ENCODE measurements at regions of chr4 and their contacts with region 1.

Region 1: GRCh38 chr4:86155766-86156165 is 204.1 kb downstream of the MAPK10 start:
- DNase-seq: no peak
- ATAC-seq: no peak
- H3K4me3 ChIP-seq: no peak overlapping the region
- H3K27ac ChIP-seq: no peak overlapping the region
- H3K4me1 ChIP-seq: no peaks in the 10 kb centered on the region
- H3K27me3 ChIP-seq: no peaks in the 10 kb centered on the region
- CTCF ChIP-seq: no peak

Region 2: DNA sequence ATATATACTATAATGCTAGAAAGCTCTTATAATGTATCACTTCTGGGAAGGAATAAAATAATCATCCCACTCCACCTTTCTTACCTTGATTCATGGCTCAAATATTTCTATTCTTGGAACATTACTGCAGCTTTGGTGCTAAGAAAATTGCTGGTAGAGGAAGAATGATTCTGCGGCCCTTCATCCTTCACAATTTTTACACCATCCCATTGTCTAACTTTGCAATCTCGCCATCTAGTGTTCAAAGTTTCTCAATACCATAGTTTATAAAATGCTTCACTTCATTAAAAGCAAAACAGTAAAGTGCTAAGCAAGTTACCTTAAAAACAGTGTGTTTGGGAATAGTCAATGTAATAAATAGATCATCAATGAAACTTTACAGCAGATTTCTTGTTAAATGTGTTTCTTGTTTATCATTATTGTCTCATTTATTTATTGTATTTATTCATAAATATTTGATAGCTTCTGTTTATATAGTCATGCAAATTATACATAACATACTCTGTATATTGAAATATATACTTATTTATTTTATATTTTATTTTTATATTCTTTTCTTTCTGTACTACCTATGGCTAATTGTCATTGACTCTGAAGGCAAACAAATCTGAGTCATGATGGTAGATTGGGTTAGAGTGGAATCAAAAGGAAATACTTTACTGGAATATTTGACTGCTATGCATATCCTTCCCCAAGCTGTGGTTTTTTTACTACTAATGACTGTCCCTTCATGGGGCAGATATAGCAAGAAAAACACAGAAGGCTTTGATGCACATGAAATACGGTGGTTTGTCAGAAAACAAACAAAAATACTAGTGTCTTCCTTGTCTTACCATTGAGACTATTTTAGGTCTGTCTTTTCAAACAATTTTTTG is 186.6 kb before region 1 on chr4:
- intact Hi-C with region 1: no loop called
- DNase-seq: no peak
- ATAC-seq: peak in 6 of 8 donors; percentile 55 to 68 (median 66)
- H3K4me3 ChIP-seq: no peak overlapping the region
- H3K27ac ChIP-seq: no peak overlapping the region
- H3K4me1 ChIP-seq: peaks cover 0 to 50% (median 26%) of the 10 kb centered on the region in 9 donors
- H3K27me3 ChIP-seq: no peaks in the 10 kb centered on the region
- CTCF ChIP-seq: peak; percentile 33 to 79 (median 66)

Region 3: DNA sequence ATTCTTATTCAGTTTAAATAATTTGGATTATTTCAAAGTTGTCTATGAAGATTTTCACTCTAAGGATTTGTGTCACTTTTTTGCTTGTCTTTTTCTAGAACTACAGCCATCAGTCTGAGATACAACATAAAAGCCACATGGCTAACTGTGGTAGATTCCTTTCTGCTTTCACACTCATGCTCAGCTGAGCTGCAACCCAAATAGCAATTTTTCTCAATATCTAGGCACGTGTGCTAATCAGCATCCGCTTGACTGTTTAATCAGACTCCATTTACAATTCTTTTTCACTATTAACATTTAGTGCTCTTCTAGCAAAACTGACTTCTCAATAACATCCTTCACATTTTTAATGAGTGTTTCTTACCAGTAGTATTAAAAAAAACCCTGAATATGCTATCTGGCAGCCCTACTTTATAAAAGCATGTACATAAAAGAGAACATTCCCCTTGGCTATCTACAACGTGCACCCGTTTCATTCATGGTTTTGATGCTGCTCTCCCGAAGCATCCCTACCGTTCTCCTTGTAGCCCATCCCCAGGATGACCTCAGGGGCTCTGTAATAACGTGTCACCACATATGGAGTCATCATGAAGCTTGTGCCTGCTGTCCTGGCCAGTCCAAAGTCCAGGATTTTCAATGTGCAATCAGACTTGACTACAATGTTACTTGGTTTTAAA is 55.1 kb before region 1 on chr4:
- intact Hi-C with region 1: no loop called
- DNase-seq: no peak
- ATAC-seq: no peak
- H3K4me3 ChIP-seq: no peak overlapping the region
- H3K27ac ChIP-seq: no peak overlapping the region
- H3K4me1 ChIP-seq: no peaks in the 10 kb centered on the region
- H3K27me3 ChIP-seq: no peaks in the 10 kb centered on the region
- CTCF ChIP-seq: no peak

Region 4: DNA sequence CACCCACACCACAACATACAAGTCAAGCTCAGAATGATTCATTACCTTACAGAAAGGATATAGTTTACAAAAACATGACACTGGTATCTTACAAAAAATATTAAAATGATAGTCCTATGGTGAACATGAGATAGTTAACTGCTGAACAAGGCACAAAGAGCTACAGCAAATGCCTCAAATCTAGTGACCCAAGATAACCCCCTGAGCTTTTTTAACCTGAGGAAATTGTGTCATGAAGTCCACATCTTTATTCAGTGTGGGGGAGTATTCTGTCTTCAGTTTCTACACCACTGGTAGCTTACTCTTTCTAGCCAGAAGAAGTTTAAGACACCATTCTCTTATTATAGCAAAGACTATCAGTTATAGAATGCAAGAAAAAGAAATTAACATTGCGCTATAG is 14.6 kb before region 1 on chr4:
- intact Hi-C with region 1: loop called in 1 of 10 experiments (anchors 1 kb)
- DNase-seq: no peak
- ATAC-seq: no peak
- H3K4me3 ChIP-seq: no peak overlapping the region
- H3K27ac ChIP-seq: no peak overlapping the region
- H3K4me1 ChIP-seq: no peaks in the 10 kb centered on the region
- H3K27me3 ChIP-seq: no peaks in the 10 kb centered on the region
- CTCF ChIP-seq: no peak